Cardiac septum (tissue), 1 donor: ENCODE measurements at regions of chr11 and their contacts with region 1.

Region 1: DNA sequence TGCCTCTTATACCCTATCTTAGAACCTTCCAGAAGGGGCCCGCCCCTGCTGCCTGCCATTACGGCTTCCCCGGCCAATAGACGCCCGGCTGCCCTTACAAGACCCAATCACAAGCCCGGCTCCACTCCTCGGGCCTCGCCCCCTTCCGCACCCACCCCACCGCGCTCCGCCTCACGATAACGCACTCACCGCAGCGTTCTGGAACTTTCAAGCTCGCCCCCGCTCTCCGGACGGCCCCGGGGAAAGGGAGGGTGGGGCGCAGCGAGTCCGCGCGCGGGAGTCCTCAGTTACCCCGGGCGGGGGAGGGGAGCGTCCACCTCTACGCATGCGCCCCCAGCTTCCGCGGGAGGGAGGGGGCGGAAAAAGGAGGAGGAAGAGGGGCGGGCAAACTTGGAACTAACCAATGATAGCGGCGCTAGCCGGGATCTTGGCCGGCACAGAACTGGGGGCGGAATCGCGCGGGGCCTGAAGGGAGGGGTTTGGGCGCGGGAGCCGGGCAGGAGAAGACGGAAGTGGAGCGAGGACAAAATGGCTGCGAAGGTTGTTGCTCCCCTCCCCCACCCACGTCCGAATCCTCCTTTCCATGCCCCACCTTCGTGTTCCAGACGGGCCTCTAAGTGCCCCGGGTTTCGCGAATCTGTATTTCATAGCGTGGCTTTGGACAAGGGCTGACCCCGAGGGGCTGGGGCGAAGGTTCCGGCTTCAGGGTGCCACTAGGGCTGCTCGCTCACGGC is 389 bp upstream of the HSPA8 start:
- DNase-seq: peak; percentile 99

Region 2: DNA sequence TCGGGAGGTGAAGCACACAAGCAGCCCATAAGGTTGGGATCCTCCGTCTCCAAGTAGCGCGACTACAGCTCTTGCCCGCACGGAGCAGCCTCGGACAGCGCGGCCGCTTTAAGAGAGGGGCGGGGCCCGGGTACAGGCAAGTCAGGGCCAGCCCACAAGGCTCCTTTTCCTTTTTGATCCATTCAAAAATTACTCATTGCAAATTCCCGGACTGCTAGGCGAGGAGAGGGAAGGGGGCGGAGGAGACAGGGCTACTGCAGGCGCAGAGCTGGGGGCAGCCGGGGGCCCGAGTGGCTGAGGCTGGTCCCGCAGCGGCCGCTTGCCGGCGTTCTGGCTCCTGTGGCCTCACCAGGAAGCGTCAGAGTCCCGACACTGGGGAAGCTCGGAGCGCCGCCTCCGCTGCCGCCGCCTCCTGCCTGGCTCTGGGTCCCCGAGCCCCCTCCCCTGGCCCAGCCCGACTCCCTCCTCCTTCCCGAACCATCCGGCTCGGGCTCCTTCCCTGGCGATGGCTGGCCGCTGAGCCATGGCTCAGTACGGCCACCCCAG is 406.7 kb before region 1 on chr11 and contains the start of gene UBASH3B:
- intact Hi-C with region 1: loop called (anchors 10 kb)
- DNase-seq: peak; percentile 92
- total RNA-seq, gene UBASH3B: 4.2 TPM

Region 3: GRCh38 chr11:122853971-122854446 is 208.3 kb before region 1 on chr11:
- intact Hi-C with region 1: no loop called
- DNase-seq: no peak

Region 4: DNA sequence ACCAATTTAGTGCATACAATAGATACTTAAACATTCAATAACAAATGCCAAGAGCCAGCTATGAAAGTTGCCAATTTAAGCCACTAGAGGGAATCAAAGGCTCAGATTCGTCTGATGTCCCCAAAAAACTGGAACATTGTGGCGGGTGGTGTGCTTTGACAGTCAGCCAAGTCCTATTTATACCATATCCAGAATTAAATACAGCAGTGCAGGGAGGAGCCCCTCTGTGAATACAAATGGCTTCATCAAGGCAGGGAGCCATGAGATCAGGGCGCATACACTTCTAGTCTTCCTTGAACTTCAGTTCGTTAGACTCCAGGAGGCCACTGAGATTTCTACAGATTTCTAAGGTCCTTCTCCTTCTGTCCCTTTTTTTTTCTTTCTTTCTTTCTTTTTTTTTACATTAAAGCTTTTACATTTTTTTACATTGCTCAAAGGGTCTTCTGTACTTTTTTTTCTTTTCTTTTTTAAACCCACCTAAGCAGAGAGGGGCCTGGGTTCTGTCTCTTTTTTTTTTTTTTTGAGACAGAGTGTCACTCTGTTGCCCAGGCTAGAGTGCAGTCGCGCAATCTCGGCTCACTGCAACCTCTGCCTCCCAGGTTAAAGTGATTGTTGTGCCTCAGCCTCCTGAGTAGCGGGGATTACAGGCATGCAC is 41.1 kb after region 1 on chr11:
- intact Hi-C with region 1: loop called (anchors 5 kb)
- DNase-seq: no peak

Region 5: DNA sequence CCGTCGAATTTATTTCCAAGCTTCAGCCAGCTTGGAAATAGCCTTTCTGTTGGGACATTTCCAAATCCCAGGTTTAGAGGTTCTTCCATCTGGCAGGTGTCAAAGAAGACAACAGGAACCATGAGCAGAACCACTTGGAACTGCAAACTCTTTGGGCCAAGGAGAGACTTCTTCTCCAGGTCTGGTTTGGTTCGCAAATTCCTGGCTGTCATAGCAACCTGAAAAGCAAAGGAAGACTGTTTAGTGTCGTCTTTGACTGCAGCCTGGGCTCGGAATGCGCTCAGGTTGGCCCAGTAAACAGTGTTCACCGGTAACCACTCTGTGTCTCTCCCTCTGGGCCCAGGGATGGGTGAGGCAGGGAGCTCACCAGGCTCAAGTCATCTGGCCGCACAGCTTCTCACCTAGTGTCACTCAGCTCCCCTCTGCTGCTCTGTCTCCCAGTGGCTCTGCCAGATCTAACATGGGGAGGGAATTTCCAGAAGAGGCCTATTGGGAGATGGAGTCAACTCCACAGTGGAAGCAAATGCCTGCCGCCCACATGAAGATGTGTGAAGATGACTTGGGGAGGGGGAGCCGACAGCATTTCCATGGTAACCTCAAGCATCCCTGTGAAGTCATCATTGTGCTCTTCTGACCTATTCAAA is 144.6 kb after region 1 on chr11:
- intact Hi-C with region 1: no loop called
- DNase-seq: no peak